PC-9 (cell line): ENCODE measurements at regions of chr19 and their contacts with region 1.

Region 1: GRCh38 chr19:50214761-50215575 is 11.5 kb downstream of the MYH14 start:
- DNase-seq: peak; percentile 99
- H3K4me3 ChIP-seq: peak overlapping the region; percentile 36; the same call in 1 of the 2 replicates
- H3K27ac ChIP-seq: peak overlapping the region; percentile 89
- H3K4me1 ChIP-seq: peaks cover 28% of the 10 kb centered on the region
- H3K27me3 ChIP-seq: no peaks in the 10 kb centered on the region
- CTCF ChIP-seq: no peak

Region 2: DNA sequence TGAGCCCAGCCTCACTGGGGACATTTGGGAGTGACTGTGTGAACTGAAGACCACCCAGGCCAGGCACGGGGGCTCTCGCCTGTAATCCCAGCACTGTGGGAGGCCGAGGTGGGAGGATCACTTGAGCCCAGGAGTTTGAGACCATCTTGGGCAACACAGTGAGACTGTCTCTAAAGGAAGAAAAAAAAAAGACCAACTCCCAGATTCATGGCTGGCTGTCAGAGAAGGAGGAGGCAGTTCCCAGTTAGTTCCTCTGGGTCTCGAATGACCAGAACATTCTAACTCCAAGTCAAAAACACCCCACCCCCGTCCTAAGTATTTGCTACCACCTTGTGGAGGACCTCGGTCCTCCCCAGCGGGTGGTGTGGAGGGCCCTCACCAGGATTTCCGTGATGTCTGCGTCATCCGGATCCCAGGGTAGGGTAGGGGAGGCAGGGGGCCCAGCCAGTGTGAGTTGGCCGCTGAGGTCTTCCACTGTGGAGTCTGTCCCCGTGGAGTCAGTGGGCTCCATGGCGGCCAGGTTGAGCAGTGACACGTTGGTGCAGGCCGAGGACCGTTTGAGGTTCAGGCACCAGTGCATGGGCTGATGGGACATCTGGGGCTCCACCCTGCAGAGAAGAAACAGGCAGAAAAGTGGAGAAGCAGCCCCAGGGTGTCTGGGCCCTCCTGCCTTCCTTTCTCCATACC is 453.2 kb before region 1 on chr19:
- CTCF ChIA-PET with region 1: no interaction called
- POLR2A ChIA-PET with region 1: no interaction called
- intact Hi-C with region 1: no loop called
- DNase-seq: no peak
- H3K4me3 ChIP-seq: no peak overlapping the region
- H3K27ac ChIP-seq: no peak overlapping the region
- H3K4me1 ChIP-seq: peaks cover 13% of the 10 kb centered on the region
- H3K27me3 ChIP-seq: no peaks in the 10 kb centered on the region
- CTCF ChIP-seq: 0 out of 2 replicates have a peak, but pooled peaks have one; percentile 12

Region 3: GRCh38 chr19:50167314-50167721 is 47.6 kb before region 1 on chr19:
- CTCF ChIA-PET with region 1: no interaction called
- POLR2A ChIA-PET with region 1: no interaction called
- intact Hi-C with region 1: loop called (anchors 2 kb)
- DNase-seq: peak; percentile 73 to 82
- H3K4me3 ChIP-seq: no peak overlapping the region
- H3K27ac ChIP-seq: peak overlapping the region; percentile 57
- H3K4me1 ChIP-seq: peaks cover 65% of the 10 kb centered on the region
- H3K27me3 ChIP-seq: no peaks in the 10 kb centered on the region
- CTCF ChIP-seq: no peak

Region 4: DNA sequence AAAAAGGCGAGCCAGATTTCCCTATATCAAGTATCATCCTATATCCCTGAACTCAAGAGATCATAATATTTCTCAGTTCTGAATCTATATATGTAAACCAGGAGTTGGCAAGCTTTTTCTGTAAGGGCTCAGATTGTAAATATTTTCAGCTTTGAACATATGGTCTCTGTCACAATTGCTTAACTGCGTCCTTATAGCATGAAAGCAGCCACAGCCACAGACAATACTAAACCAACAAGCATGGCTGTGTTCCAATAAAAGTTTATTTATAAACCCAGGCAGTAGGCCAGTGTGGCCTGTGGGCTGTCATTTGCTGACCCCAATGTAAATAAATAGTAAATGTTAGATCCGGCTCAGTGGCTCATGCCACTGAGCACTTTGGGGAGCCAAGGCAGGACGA is 23.8 kb before region 1 on chr19:
- CTCF ChIA-PET with region 1: no interaction called
- POLR2A ChIA-PET with region 1: no interaction called
- intact Hi-C with region 1: loop called (anchors 2 kb)
- DNase-seq: peak in 1 of 2 experiments; percentile 65
- H3K4me3 ChIP-seq: no peak overlapping the region
- H3K27ac ChIP-seq: peak overlapping the region; percentile 49
- H3K4me1 ChIP-seq: peaks cover 20% of the 10 kb centered on the region
- H3K27me3 ChIP-seq: no peaks in the 10 kb centered on the region
- CTCF ChIP-seq: no peak

Region 5: GRCh38 chr19:50252111-50252886 is 37.3 kb after region 1 on chr19:
- CTCF ChIA-PET with region 1: no interaction called
- POLR2A ChIA-PET with region 1: interaction called, 12 read pairs
- intact Hi-C with region 1: no loop called
- DNase-seq: no peak
- H3K4me3 ChIP-seq: no peak overlapping the region
- H3K27ac ChIP-seq: no peak overlapping the region
- H3K4me1 ChIP-seq: no peaks in the 10 kb centered on the region
- H3K27me3 ChIP-seq: no peaks in the 10 kb centered on the region
- CTCF ChIP-seq: peak; percentile 91

Region 6: GRCh38 chr19:51688672-51689571 is 1474.0 kb after region 1 on chr19:
- CTCF ChIA-PET with region 1: no interaction called
- POLR2A ChIA-PET with region 1: interaction called, 13 read pairs
- intact Hi-C with region 1: no loop called
- DNase-seq: peak; percentile 72 to 96
- H3K4me3 ChIP-seq: peak overlapping the region; percentile 89
- H3K27ac ChIP-seq: no peak overlapping the region; the same call in 1 of the 2 replicates
- H3K4me1 ChIP-seq: peaks cover 29% of the 10 kb centered on the region
- H3K27me3 ChIP-seq: no peaks in the 10 kb centered on the region
- CTCF ChIP-seq: peak; percentile 33; the same call in 1 of the 2 replicates